Activated T-helper 1 cell treated with anti-CD3 and anti-CD28 coated beads, Interleukin-12 subunit alpha, Interleukin-12 subunit beta, Interleukin-2, Interleukin-4 antibody, amounts not matched to agents 30 ng/mL and 10 ng/mL and 1 ng/mL, durations not matched to agents 14 hours and 24 hours and 36 hours (primary cell): ENCODE measurements at regions of chr1 and their contacts with region 1.

Region 1: DNA sequence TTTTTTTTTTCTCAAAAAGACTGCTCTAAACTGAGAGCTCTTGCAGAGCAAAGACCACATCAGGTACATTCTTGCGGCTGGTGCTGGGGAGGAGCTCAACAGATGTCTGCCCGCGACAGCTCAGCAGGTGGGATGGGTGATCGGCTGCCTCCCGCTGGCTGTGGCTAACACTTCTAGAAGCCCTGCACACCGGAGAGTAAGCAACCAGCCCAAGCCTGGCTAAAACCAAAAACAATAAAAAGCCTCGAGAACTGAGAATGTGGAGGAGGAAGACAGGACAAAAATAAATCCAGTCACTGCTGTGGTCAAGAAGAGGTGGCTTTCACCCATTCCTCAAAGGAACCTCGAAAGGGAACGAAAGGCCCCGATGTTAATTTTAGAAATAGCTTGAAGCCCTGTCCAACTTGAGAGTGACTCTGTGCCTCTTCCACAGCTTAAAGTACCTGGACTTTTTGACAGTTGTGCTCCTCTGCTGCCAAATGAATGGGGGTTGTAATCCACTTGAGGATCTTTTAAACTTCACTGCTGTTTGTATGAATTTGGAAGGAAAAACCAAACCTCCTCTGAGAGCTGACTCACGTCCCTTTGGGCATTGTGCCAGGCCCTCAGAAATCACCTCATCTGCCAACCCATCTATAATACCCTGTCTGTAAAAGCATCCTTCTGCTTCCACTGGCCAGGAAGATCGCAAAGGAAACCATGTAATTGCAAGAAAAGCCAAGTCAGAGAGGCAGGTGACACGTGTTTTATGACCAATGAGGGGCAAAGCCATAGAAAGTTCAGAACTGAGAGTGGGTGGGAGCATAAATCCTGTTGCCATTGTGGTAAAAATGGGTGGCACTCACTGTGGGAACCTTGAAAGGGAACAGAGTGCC is 78.6 kb downstream of the KCNN3 start:
- DNase-seq: peak; percentile 78
- H3K4me3 Mint-ChIP-seq: peak overlapping the region; percentile 53
- H3K27ac Mint-ChIP-seq: peak overlapping the region; percentile 86
- H3K4me1 Mint-ChIP-seq: peaks cover 32% of the 10 kb centered on the region
- H3K27me3 Mint-ChIP-seq: peaks cover 4% of the 10 kb centered on the region

Region 2: DNA sequence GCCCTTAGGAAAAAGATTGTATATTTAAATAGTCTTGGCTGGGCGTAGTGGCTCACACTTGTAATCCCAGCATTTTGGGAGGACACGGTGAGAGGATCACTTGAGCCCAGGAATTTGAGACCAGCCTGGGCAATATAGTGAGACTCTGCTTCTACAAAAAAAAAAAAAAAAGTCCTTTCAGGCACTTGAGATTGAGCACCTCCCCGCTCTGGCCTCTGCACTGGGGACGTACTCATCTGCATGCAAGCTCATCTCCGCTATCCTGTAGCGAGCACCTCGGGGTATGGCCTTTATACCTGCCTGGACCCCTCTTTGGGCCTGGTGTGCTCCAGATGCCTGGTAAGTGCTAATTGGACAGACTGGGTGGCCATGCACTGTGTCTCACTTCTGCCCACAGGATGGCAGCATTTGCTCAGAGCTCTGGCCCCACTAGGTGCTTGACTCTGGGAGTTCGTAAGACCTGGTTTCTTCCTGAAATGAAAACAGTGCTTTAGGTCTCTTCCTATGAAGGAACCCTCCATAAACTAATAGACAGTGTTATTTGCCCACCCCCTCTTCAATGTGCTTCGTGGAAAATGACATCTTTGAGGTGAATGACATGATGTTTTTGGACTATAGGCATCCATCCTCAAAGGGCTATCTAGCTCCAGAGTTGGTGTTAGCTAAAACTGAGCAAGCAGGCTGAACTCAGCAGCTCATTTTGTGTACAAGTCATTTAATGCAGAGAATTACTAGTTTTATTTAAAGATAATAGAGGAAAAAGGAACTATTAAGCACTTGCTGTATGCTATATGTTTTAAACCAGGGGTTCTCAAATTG is 121.9 kb before region 1 on chr1:
- intact Hi-C with region 1: loop called (anchors 1 kb)
- DNase-seq: peak; percentile 64
- H3K4me3 Mint-ChIP-seq: no peak overlapping the region
- H3K27ac Mint-ChIP-seq: no peak overlapping the region
- H3K4me1 Mint-ChIP-seq: peaks cover 17% of the 10 kb centered on the region
- H3K27me3 Mint-ChIP-seq: peaks cover 2% of the 10 kb centered on the region

Region 3: DNA sequence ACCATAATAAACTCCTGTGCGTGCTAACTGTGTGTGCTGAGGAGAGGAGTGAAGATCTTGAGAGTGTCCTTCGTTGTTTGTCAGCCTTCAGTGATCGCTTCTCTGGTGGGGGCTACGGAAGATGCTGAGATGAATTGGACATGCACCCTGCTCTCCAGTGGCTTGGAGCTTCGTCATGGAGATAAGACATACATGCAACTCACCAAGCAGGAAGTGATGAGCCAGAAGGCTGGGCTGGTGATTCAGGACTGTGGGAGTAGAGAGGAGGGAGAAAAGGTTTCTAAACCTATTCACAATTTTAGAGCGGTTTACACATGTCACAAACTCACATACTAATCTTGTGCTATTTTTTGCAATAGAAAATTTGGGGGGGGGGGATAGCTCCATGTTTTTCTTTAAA is 54.7 kb before region 1 on chr1:
- intact Hi-C with region 1: loop called (anchors 2 kb)
- DNase-seq: no peak
- H3K4me3 Mint-ChIP-seq: peak overlapping the region; percentile 49
- H3K27ac Mint-ChIP-seq: peak overlapping the region; percentile 87
- H3K4me1 Mint-ChIP-seq: peaks cover 65% of the 10 kb centered on the region
- H3K27me3 Mint-ChIP-seq: peaks cover 2% of the 10 kb centered on the region

Region 4: GRCh38 chr1:154847891-154848290 is 56.4 kb after region 1 on chr1:
- intact Hi-C with region 1: loop called (anchors 1 kb)
- DNase-seq: no peak
- H3K4me3 Mint-ChIP-seq: no peak overlapping the region
- H3K27ac Mint-ChIP-seq: no peak overlapping the region
- H3K4me1 Mint-ChIP-seq: peaks cover 18% of the 10 kb centered on the region
- H3K27me3 Mint-ChIP-seq: peaks cover 10% of the 10 kb centered on the region

Region 5: DNA sequence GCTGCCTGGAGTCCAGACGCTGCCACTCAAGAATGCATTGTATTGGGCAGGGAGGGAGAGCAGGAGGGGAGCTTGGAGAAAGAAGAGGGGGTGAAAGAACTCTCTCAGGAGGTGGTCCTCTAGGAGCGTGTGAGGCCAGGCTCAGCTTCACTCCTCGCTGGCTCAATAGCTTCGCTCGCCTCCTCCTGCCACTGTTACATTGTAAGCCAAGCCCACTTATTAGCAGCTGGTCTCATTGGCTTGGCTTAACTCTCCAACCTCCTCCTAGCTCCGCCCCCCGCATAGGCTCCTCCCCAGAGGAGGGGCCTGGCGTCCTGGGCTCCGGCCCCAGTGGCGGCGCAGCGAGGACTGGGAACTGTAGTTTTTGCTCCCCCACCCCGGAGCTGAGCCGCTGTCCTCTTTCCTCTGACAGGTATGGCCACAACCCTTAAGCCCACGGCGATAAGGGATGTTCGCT is 78.6 kb after region 1 on chr1 and contains the start of gene KCNN3:
- intact Hi-C with region 1: loop called (anchors 5 kb)
- DNase-seq: peak; percentile 71
- H3K4me3 Mint-ChIP-seq: peak within 1 kb of the TSS; percentile 3
- H3K27ac Mint-ChIP-seq: no peak within 1 kb of the TSS
- H3K4me1 Mint-ChIP-seq: peaks cover 47% of the 10 kb centered on the region
- H3K27me3 Mint-ChIP-seq: peaks cover 24% of the 10 kb centered on the region
- total RNA-seq, gene KCNN3: 0.34 and 0.36 TPM in 2 replicates

Region 6: GRCh38 chr1:154906621-154907081 is 115.1 kb after region 1 on chr1:
- intact Hi-C with region 1: no loop called
- DNase-seq: no peak
- H3K4me3 Mint-ChIP-seq: no peak overlapping the region
- H3K27ac Mint-ChIP-seq: no peak overlapping the region
- H3K4me1 Mint-ChIP-seq: no peaks in the 10 kb centered on the region
- H3K27me3 Mint-ChIP-seq: peaks cover 3% of the 10 kb centered on the region